CD8-positive, alpha-beta T cell (primary cell): ENCODE measurements at regions of chrX and their contacts with region 1.

Region 1: DNA sequence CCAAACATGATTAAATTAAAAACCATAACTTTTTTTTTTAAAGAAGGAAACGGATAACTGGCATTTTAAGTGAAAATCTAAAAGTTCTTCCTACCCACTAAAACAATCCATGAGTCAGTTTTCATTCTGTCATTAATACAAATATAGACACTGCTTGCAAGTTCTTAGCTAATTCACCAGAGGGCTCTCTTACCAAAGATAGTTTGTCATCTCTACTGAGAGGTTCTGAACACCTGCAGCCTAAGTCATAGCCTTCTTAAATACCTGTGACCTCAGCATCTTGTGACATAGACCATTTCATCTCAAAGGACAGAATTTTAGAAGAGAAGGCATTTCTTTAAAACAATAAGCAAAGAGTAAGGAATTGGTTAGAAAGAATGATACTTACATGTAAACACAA is 65.3 kb upstream of the FAM120C start:
- DNase-seq: peak in 2 of 9 experiments; percentile 2 to 18
- ATAC-seq: no peak
- H3K4me3 ChIP-seq: no peak overlapping the region
- H3K4me3 Mint-ChIP-seq: no peak overlapping the region
- H3K27ac ChIP-seq: no peak overlapping the region
- H3K27ac Mint-ChIP-seq: no peak overlapping the region
- H3K4me1 ChIP-seq: no peaks in the 10 kb centered on the region
- H3K4me1 Mint-ChIP-seq: no peaks in the 10 kb centered on the region
- H3K27me3 ChIP-seq: no peaks in the 10 kb centered on the region
- H3K27me3 Mint-ChIP-seq: peaks cover 2% of the 10 kb centered on the region
- CTCF ChIP-seq: peak; percentile 21

Region 2: DNA sequence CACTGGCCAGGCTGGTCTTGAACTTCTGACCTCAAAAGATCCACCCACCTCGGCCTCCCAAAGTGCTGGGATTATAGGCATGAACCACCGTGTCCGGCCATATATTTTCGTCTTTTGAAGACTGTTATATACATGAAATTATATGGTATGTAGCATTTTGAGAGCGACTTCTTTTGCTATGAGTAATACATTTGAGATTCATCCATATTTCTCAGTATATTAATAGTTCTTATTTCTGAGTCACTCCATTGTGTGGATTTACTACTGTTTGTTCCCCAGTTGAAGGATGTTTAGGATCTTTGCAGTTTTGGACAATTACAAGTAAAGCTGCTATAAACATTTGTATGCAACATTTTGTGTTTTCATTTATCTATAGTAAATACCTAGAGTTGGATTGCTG is 316.6 kb after region 1 on chrX:
- CTCF ChIA-PET with region 1: no interaction called
- POLR2A ChIA-PET with region 1: no interaction called
- intact Hi-C with region 1: no loop called
- DNase-seq: no peak
- ATAC-seq: no peak
- H3K4me3 ChIP-seq: no peak overlapping the region
- H3K4me3 Mint-ChIP-seq: no peak overlapping the region
- H3K27ac ChIP-seq: no peak overlapping the region
- H3K27ac Mint-ChIP-seq: no peak overlapping the region
- H3K4me1 ChIP-seq: no peaks in the 10 kb centered on the region
- H3K4me1 Mint-ChIP-seq: no peaks in the 10 kb centered on the region
- H3K27me3 ChIP-seq: no peaks in the 10 kb centered on the region
- H3K27me3 Mint-ChIP-seq: no peaks in the 10 kb centered on the region
- CTCF ChIP-seq: no peak

Region 3: GRCh38 chrX:54786962-54787361 is 538.7 kb after region 1 on chrX:
- CTCF ChIA-PET with region 1: no interaction called
- POLR2A ChIA-PET with region 1: no interaction called
- intact Hi-C with region 1: loop called (anchors 2 to 5 kb)
- DNase-seq: peak in 6 of 9 experiments; percentile 19 to 57 (median 35)
- ATAC-seq: peak; percentile 68
- H3K4me3 ChIP-seq: no peak overlapping the region
- H3K4me3 Mint-ChIP-seq: no peak overlapping the region
- H3K27ac ChIP-seq: no peak overlapping the region
- H3K27ac Mint-ChIP-seq: no peak overlapping the region
- H3K4me1 ChIP-seq: no peaks in the 10 kb centered on the region
- H3K4me1 Mint-ChIP-seq: no peaks in the 10 kb centered on the region
- H3K27me3 ChIP-seq: no peaks in the 10 kb centered on the region
- H3K27me3 Mint-ChIP-seq: no peaks in the 10 kb centered on the region
- CTCF ChIP-seq: peak; percentile 16

Region 4: GRCh38 chrX:55619547-55619946 is 1371.2 kb after region 1 on chrX:
- CTCF ChIA-PET with region 1: no interaction called
- POLR2A ChIA-PET with region 1: no interaction called
- intact Hi-C with region 1: no loop called
- DNase-seq: no peak
- ATAC-seq: no peak
- H3K4me3 ChIP-seq: no peak overlapping the region
- H3K4me3 Mint-ChIP-seq: no peak overlapping the region
- H3K27ac ChIP-seq: no peak overlapping the region
- H3K27ac Mint-ChIP-seq: no peak overlapping the region
- H3K4me1 ChIP-seq: no peaks in the 10 kb centered on the region
- H3K4me1 Mint-ChIP-seq: no peaks in the 10 kb centered on the region
- H3K27me3 ChIP-seq: no peaks in the 10 kb centered on the region
- H3K27me3 Mint-ChIP-seq: no peaks in the 10 kb centered on the region
- CTCF ChIP-seq: no peak